ENCODE measurements at regions of chr6 and their contacts with region 1.

Region 1: DNA sequence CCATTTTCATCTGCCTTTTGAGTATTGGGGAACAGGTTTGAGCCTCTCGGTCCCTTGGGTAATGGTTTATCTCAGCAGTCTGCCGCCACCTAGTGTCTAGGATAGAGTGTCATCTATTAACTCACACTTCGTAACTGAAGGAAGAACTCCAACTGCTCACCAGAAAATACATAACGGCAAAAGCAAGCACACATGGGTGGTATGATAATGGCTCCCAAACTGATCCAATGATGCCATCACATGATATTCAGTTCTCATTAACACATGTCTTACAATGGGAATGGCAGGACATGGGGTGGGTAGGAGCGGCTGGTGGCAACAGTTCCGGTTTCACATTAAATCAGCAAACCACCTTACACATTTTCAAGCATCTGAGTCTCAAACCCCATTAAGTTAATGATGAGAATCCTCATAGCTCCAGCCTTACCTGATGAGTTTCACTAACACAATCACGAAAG is 110.7 kb upstream of the PHACTR1 start:
- DNase-seq: peak; percentile 20
- H3K4me3 Mint-ChIP-seq: no peak overlapping the region
- H3K27ac Mint-ChIP-seq: no peak overlapping the region
- H3K4me1 Mint-ChIP-seq: peaks cover 30% of the 10 kb centered on the region
- H3K27me3 Mint-ChIP-seq: no peaks in the 10 kb centered on the region

Region 2: GRCh38 chr6:11744753-11745152 is 861.2 kb before region 1 on chr6:
- intact Hi-C with region 1: no loop called
- DNase-seq: no peak
- H3K4me3 Mint-ChIP-seq: no peak overlapping the region
- H3K27ac Mint-ChIP-seq: no peak overlapping the region
- H3K4me1 Mint-ChIP-seq: peaks cover 8% of the 10 kb centered on the region
- H3K27me3 Mint-ChIP-seq: peaks cover 2% of the 10 kb centered on the region

Region 3: GRCh38 chr6:12051861-12052368 is 554.0 kb before region 1 on chr6:
- intact Hi-C with region 1: loop called (anchors 10 kb)
- DNase-seq: peak; percentile 76
- H3K4me3 Mint-ChIP-seq: peak overlapping the region; percentile 78
- H3K27ac Mint-ChIP-seq: peak overlapping the region; percentile 96
- H3K4me1 Mint-ChIP-seq: peaks cover 77% of the 10 kb centered on the region
- H3K27me3 Mint-ChIP-seq: no peaks in the 10 kb centered on the region

Region 4: GRCh38 chr6:12075067-12075563 is 530.8 kb before region 1 on chr6:
- intact Hi-C with region 1: no loop called
- DNase-seq: no peak
- H3K4me3 Mint-ChIP-seq: no peak overlapping the region
- H3K27ac Mint-ChIP-seq: no peak overlapping the region
- H3K4me1 Mint-ChIP-seq: peaks cover 54% of the 10 kb centered on the region
- H3K27me3 Mint-ChIP-seq: no peaks in the 10 kb centered on the region

Region 5: GRCh38 chr6:12150812-12151432 is 455.0 kb before region 1 on chr6:
- intact Hi-C with region 1: loop called (anchors 10 kb)
- DNase-seq: no peak
- H3K4me3 Mint-ChIP-seq: no peak overlapping the region
- H3K27ac Mint-ChIP-seq: no peak overlapping the region
- H3K4me1 Mint-ChIP-seq: peaks cover 26% of the 10 kb centered on the region
- H3K27me3 Mint-ChIP-seq: no peaks in the 10 kb centered on the region

Region 6: DNA sequence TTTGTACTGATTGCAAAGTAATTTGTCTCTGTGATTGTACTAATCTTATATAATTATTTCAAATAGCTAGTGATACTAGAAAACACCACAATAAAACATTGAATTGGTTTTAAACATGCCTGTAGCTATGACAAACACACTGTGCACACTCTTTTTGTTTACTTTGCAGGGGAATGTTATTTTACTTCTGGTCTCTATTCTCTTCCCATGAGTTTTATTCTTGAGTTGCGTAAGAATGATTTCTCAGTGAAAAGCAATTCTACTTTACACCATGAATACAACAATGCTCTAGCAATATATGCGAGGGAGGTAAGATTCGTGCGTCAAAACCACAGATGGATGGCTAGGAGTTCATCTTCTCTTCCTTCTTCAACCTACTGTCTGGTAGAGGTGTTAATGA is 42.3 kb after region 1 on chr6:
- intact Hi-C with region 1: no loop called
- DNase-seq: no peak
- H3K4me3 Mint-ChIP-seq: no peak overlapping the region
- H3K27ac Mint-ChIP-seq: no peak overlapping the region
- H3K4me1 Mint-ChIP-seq: no peaks in the 10 kb centered on the region
- H3K27me3 Mint-ChIP-seq: peaks cover 2% of the 10 kb centered on the region

Region 7: GRCh38 chr6:13574149-13574570 is 968.2 kb after region 1 on chr6:
- intact Hi-C with region 1: no loop called
- DNase-seq: peak; percentile 90
- H3K4me3 Mint-ChIP-seq: peak overlapping the region; percentile 92
- H3K27ac Mint-ChIP-seq: peak overlapping the region; percentile 99
- H3K4me1 Mint-ChIP-seq: peaks cover 19% of the 10 kb centered on the region
- H3K27me3 Mint-ChIP-seq: peaks cover 9% of the 10 kb centered on the region